Activated naive CD4-positive, alpha-beta T cell treated with anti-CD3 and anti-CD28 coated beads for 36 hours (primary cell): ENCODE measurements at regions of chr2 and their contacts with region 1.

Region 1: DNA sequence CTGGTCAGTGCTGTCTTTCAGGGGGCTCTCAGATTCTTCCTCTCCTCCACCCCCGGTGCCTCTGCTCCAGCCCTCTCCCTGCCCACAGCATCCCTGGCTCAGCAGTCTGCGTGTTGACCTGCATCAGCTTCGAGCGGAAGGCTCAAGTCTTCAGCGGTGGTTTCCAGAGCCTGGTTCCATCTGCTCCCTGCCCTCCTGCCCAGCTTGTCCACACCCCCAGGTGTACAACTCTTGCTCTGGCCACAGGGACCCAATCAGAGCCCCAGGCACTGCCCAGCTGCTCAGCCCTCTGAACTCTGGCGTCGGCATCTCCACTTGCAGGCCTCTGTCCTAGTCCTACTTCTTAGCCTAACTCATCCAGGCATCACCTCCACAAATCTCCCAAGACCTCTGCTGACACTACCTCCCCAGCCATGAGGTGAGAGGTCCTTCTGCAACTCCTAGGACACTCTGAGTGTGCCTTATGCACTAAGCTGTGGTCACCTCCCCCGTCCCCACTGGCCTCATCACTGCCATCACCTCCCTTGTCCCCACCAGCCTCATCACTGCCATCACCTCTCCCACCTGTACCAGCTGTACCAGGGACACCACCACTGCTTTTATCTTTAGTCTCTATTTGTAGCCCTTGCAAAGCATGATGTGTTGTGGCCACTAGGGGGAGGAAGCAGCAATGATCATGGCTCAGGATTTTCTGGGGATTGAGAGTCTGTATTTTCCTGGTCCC is 60.9 kb downstream of the EDAR start:
- DNase-seq: peak; percentile 66
- H3K4me3 Mint-ChIP-seq: no peak overlapping the region
- H3K27ac Mint-ChIP-seq: no peak overlapping the region
- H3K4me1 Mint-ChIP-seq: no peaks in the 10 kb centered on the region
- H3K27me3 Mint-ChIP-seq: no peaks in the 10 kb centered on the region

Region 2: DNA sequence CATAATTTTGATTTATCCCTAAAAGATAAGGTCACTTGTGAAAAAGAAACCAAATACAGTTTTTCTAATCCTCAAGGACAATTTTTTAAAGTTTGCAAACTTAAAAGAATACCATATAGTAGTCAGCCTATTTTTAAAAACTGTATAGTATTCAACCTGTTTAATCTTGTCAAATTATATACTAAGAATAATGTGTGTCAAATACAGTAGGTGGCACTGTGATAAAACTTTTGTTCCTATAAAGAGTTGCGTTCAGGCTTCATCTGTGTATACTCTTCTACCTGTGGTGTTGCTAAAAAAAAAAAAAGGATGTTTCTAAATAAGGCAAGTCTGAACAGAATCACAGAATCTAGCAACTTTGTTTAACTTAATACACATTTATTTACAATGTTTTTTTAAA is 72.9 kb before region 1 on chr2:
- CTCF ChIA-PET with region 1: interaction called, 7 read pairs
- intact Hi-C with region 1: loop called (anchors 5 kb)
- DNase-seq: no peak
- H3K4me3 Mint-ChIP-seq: no peak overlapping the region
- H3K27ac Mint-ChIP-seq: no peak overlapping the region
- H3K4me1 Mint-ChIP-seq: peaks cover 2% of the 10 kb centered on the region
- H3K27me3 Mint-ChIP-seq: no peaks in the 10 kb centered on the region